Activated T-helper 2 cell treated with anti-CD3 and anti-CD28 coated beads, Interferon-gamma antibody, Interleukin-2, Interleukin-4, amounts not matched to agents 10 μg/mL and 5 μg/mL and 100 μg/mL, durations not matched to agents 14 hours and 24 hours and 36 hours (primary cell): ENCODE measurements at regions of chr2 and their contacts with region 1.

Region 1: GRCh38 chr2:44802777-44803424 is 138.6 kb upstream of the SIX3 start:
- DNase-seq: no peak
- H3K4me3 Mint-ChIP-seq: no peak overlapping the region
- H3K27ac Mint-ChIP-seq: no peak overlapping the region
- H3K4me1 Mint-ChIP-seq: peaks cover 29% of the 10 kb centered on the region
- H3K27me3 Mint-ChIP-seq: peaks cover 80% of the 10 kb centered on the region

Region 2: DNA sequence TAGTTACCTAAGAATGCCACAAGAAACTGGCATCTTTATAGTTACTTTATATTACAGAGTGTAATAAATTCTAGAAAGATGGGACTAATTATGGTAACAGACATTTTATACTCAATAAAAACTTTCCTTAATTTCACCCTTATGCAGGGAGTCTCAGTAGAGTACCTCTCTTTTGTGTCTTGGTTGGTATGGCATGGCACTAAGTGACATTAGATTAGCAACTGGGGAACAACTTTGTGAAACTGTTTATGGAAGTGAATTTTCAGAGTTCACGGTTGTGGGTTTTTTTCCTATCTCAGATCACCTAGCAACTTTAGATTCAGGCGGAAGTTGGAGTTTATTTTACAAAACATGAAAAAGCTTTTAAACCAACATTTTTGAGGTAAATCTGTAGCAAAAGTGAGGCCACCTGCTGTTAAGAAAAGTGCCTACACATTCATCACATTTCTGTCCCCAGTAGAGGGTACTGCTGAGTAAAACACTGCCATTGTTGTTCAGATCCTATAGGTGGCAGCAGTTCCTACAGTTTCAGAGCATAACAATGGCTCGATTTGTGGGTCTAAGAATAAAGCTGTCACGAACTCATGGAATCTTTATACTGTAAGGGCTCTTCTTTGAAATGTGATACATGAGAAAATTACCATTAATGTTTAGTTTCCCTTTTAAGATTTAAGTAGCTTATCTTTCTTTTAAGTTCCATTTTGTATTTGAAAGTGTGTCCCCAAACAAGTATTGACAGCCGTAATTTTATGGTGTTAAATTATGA is 323.6 kb before region 1 on chr2:
- intact Hi-C with region 1: loop called (anchors 5 kb)
- DNase-seq: peak; percentile 29
- H3K4me3 Mint-ChIP-seq: no peak overlapping the region
- H3K27ac Mint-ChIP-seq: no peak overlapping the region
- H3K4me1 Mint-ChIP-seq: peaks cover 4% of the 10 kb centered on the region
- H3K27me3 Mint-ChIP-seq: no peaks in the 10 kb centered on the region

Region 3: GRCh38 chr2:44930274-44931197 is 127.6 kb after region 1 on chr2:
- intact Hi-C with region 1: loop called (anchors 1 kb)
- DNase-seq: no peak
- H3K4me3 Mint-ChIP-seq: no peak overlapping the region
- H3K27ac Mint-ChIP-seq: no peak overlapping the region
- H3K4me1 Mint-ChIP-seq: peaks cover 8% of the 10 kb centered on the region
- H3K27me3 Mint-ChIP-seq: peaks cover 77% of the 10 kb centered on the region

Region 4: GRCh38 chr2:45169339-45170190 is 366.7 kb after region 1 on chr2:
- intact Hi-C with region 1: loop called (anchors 5 kb)
- DNase-seq: no peak
- H3K4me3 Mint-ChIP-seq: peak overlapping the region; percentile 26
- H3K27ac Mint-ChIP-seq: no peak overlapping the region
- H3K4me1 Mint-ChIP-seq: peaks cover 4% of the 10 kb centered on the region
- H3K27me3 Mint-ChIP-seq: peaks cover 75% of the 10 kb centered on the region